HepG2 (cell line): ENCODE measurements at regions of chr14 and their contacts with region 1.

Region 1: GRCh38 chr14:35292051-35292769 is at the start of gene PSMA6:
- DNase-seq: peak; percentile 100
- ATAC-seq: peak; percentile 92
- H3K4me3 ChIP-seq: peak within 1 kb of the TSS; percentile 78 to 90 (median 86)
- H3K27ac ChIP-seq: peak within 1 kb of the TSS; percentile 96
- H3K4me1 ChIP-seq: peaks cover 54% of the 10 kb centered on the region
- H3K27me3 ChIP-seq: no peaks in the 10 kb centered on the region; a peak in 2 of 5 replicates
- CTCF ChIP-seq: peak; percentile 25; the same call in 1 of the 2 replicates
- EP300 ChIP-seq: peak; percentile 72 to 77; a peak in 3 of 4 replicates
- POLR2A ChIP-seq: peak; percentile 94 to 98
- RAD21 ChIP-seq: peak; percentile 54
- total RNA-seq, gene PSMA6: 1,109 and 1,579 TPM in 2 replicates

Region 2: GRCh38 chr14:34982417-34983147 is 309.6 kb before region 1 on chr14 and contains the start of gene SRP54:
- CTCF ChIA-PET with region 1: no interaction called
- POLR2A ChIA-PET with region 1: interaction called, 39 read pairs
- in situ Hi-C with region 1: no loop called
- intact Hi-C with region 1: loop called (anchors 5 kb)
- DNase-seq: peak; percentile 100
- ATAC-seq: peak; percentile 89
- H3K4me3 ChIP-seq: peak within 1 kb of the TSS; percentile 78 to 84 (median 80)
- H3K27ac ChIP-seq: peak within 1 kb of the TSS; percentile 93
- H3K4me1 ChIP-seq: peaks cover 59% of the 10 kb centered on the region
- H3K27me3 ChIP-seq: peaks cover 0 to 3% of the 10 kb centered on the region in 2 experiments; a peak in 1 of 5 replicates
- CTCF ChIP-seq: peak; percentile 67
- EP300 ChIP-seq: no peak; a peak in 2 of 4 replicates
- POLR2A ChIP-seq: peak; percentile 99
- RAD21 ChIP-seq: peak; percentile 59
- total RNA-seq, gene SRP54: 207 and 297 TPM in 2 replicates

Region 3: GRCh38 chr14:35079742-35080141 is 212.5 kb before region 1 on chr14:
- CTCF ChIA-PET with region 1: no interaction called
- POLR2A ChIA-PET with region 1: no interaction called
- in situ Hi-C with region 1: no loop called
- intact Hi-C with region 1: no loop called
- DNase-seq: no peak
- ATAC-seq: peak; percentile 14; the same call in 1 of the 3 replicates
- H3K4me3 ChIP-seq: no peak overlapping the region
- H3K27ac ChIP-seq: no peak overlapping the region
- H3K4me1 ChIP-seq: peaks cover 13% of the 10 kb centered on the region
- H3K27me3 ChIP-seq: no peaks in the 10 kb centered on the region
- CTCF ChIP-seq: no peak
- EP300 ChIP-seq: no peak
- POLR2A ChIP-seq: no peak
- RAD21 ChIP-seq: no peak

Region 4: GRCh38 chr14:35140718-35141581 is 151.3 kb before region 1 on chr14:
- CTCF ChIA-PET with region 1: no interaction called
- POLR2A ChIA-PET with region 1: interaction called, 15 read pairs
- in situ Hi-C with region 1: no loop called
- intact Hi-C with region 1: loop called (anchors 1 kb)
- DNase-seq: peak; percentile 68
- ATAC-seq: no peak
- H3K4me3 ChIP-seq: no peak overlapping the region
- H3K27ac ChIP-seq: no peak overlapping the region
- H3K4me1 ChIP-seq: peaks cover 17% of the 10 kb centered on the region
- H3K27me3 ChIP-seq: no peaks in the 10 kb centered on the region
- CTCF ChIP-seq: peak; percentile 64
- EP300 ChIP-seq: no peak
- POLR2A ChIP-seq: no peak
- RAD21 ChIP-seq: peak; percentile 69

Region 5: GRCh38 chr14:35215110-35215876 is 76.9 kb before region 1 on chr14:
- CTCF ChIA-PET with region 1: no interaction called
- POLR2A ChIA-PET with region 1: interaction called, 10 read pairs
- in situ Hi-C with region 1: no loop called
- intact Hi-C with region 1: loop called (anchors 2 kb)
- DNase-seq: peak; percentile 57
- ATAC-seq: no peak; the same call in 2 of the 3 replicates
- H3K4me3 ChIP-seq: no peak overlapping the region
- H3K27ac ChIP-seq: no peak overlapping the region
- H3K4me1 ChIP-seq: peaks cover 25% of the 10 kb centered on the region
- H3K27me3 ChIP-seq: no peaks in the 10 kb centered on the region
- CTCF ChIP-seq: peak; percentile 68
- EP300 ChIP-seq: no peak
- POLR2A ChIP-seq: no peak
- RAD21 ChIP-seq: peak; percentile 46; the same call in 1 of the 2 replicates

Region 6: DNA sequence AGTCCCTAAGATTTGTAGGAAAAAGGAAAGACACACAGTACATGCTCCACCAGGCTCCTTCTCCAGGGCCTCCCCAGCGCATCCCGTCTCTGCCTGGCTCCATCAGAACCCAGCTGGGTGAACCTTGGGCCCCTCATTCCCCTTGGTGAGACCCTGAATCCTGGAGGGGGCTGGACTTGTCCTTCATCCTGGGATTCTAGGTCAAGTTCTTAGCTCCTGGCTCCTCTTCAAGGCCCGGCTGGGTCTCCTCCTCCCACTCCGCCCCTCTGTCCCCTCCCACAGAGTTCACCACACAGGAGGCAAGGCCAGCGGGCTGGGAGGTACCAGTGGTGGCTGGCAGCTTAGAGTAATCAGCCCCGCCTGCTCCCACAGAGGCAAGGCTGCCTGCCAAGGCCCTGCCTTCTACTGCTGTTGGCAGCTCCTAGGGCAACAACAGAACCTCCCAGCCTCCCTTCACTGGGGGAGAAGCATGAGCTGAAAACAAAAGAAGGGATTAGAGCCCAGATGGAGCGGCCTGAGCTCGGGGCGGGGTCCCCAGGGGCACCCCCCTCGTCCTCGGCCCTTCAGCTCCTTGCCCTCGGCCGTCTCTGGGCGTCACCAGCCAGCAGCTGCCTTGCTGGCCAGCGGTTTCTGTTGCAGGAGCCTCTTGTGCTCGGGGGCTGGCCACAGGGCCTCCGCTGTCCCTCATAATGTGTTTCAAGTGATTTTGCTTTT is 49.4 kb after region 1 on chr14:
- CTCF ChIA-PET with region 1: interaction called, 3 read pairs
- POLR2A ChIA-PET with region 1: interaction called, 81 read pairs
- in situ Hi-C with region 1: no loop called
- intact Hi-C with region 1: no loop called
- DNase-seq: peak; percentile 91
- ATAC-seq: peak; percentile 85
- H3K4me3 ChIP-seq: peak overlapping the region; percentile 63 to 78 (median 64)
- H3K27ac ChIP-seq: no peak overlapping the region
- H3K4me1 ChIP-seq: peaks cover 90% of the 10 kb centered on the region
- H3K27me3 ChIP-seq: peaks cover 0 to 3% of the 10 kb centered on the region in 2 experiments; a peak in 2 of 5 replicates
- CTCF ChIP-seq: no peak; the same call in 1 of the 2 replicates
- EP300 ChIP-seq: no peak; a peak in 1 of 4 replicates
- POLR2A ChIP-seq: peak in 1 of 2 experiments; percentile 62; a peak in 2 of 4 replicates
- RAD21 ChIP-seq: 0 out of 2 replicates have a peak, but pooled peaks have one; percentile 31

Region 7: DNA sequence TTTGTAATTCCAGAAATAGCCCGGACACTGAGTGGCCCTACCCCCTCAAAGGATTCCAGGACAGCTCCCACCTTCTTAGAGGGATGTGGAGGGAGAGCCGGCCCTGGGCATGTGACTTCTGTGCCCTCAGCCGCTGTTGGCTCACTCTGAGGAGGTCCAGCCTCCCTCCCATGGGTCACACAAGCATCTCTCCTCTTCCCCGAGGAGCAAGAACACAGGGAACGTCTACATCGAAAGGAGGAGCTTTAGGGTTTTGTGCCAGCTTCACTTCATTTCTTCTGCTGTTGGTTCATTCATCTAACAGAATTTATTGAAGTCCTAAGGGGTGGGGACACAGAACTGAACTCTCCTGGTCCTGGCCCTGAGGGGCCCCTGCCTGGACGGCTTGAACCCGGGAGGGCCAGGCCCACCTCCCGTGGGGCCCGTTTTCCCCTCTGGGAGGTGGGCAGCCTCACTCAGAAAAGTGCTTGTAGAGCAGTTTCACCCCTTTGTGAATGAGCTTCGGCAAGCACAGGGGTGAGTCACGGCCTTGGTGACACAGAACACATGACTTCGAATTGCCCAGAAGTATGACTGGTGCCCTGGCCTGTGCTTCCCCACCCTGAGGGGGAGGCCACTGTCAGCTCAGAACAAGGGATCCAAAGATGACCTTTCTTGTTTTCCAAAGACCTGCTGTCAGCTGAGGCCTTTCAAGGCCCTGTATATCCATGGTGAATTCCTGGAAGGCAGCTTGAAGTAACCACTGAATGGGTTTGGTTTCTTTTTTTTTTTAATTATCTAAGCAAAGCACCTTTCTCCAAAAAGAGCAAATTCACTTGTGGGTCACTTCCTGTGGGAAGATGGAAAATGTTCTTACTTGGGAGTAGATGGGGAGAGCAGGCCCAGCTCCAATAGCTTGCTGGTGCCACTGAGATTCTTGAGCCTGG is 73.2 kb after region 1 on chr14:
- CTCF ChIA-PET with region 1: no interaction called
- POLR2A ChIA-PET with region 1: interaction called, 34 read pairs
- in situ Hi-C with region 1: no loop called
- intact Hi-C with region 1: no loop called
- DNase-seq: peak; percentile 98
- ATAC-seq: peak; percentile 87
- H3K4me3 ChIP-seq: peak overlapping the region in 2 of 3 experiments; percentile 1 to 38; a peak in 2 of 6 replicates
- H3K27ac ChIP-seq: no peak overlapping the region
- H3K4me1 ChIP-seq: peaks cover 61% of the 10 kb centered on the region
- H3K27me3 ChIP-seq: 0 out of 5 replicates have a peak, but pooled peaks cover 0 to 6% of the 10 kb centered on the region in 2 experiments
- CTCF ChIP-seq: no peak; the same call in 1 of the 2 replicates
- EP300 ChIP-seq: peak; percentile 73 to 75; a peak in 3 of 4 replicates
- POLR2A ChIP-seq: 0 out of 4 replicates have a peak, but pooled peaks of 1 of the 2 experiments have one; percentile 28
- RAD21 ChIP-seq: peak; percentile 35; the same call in 1 of the 2 replicates

Region 8: GRCh38 chr14:35808076-35808652 is 516.0 kb after region 1 on chr14:
- CTCF ChIA-PET with region 1: no interaction called
- POLR2A ChIA-PET with region 1: interaction called, 3 read pairs
- in situ Hi-C with region 1: no loop called
- intact Hi-C with region 1: loop called (anchors 10 kb)
- DNase-seq: no peak
- ATAC-seq: no peak
- H3K4me3 ChIP-seq: peak overlapping the region; percentile 85 to 96 (median 86)
- H3K27ac ChIP-seq: peak overlapping the region; percentile 89
- H3K4me1 ChIP-seq: peaks cover 58% of the 10 kb centered on the region
- H3K27me3 ChIP-seq: no peaks in the 10 kb centered on the region; a peak in 1 of 5 replicates
- CTCF ChIP-seq: no peak
- EP300 ChIP-seq: no peak
- POLR2A ChIP-seq: no peak; a peak in 1 of 4 replicates
- RAD21 ChIP-seq: 0 out of 2 replicates have a peak, but pooled peaks have one; percentile 15